Mammary epithelial cell (primary cell): ENCODE measurements at regions of chr18 and their contacts with region 1.

Region 1: DNA sequence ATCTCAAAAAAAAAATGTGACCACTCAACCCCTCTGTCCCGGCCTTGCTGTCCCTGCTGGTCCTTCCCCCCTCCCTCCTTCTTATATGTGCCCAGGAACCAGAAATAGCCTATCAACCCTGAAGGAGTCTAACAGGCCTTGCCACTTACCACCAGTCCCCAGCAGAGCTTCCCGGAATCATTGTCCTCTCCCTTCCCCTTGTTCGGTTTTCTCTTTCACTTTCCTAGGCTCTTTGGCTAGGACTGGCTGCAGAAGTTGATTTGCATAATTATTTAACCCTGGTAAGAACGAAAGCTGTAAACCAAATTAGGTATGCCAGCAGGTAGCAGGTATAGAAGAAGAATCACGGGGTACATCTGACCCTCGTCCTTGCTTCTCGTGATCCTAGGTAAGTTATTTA is 72.6 kb upstream of the ZNF532 start:
- DNase-seq: no peak
- H3K4me3 ChIP-seq: no peak overlapping the region
- H3K27ac ChIP-seq: no peak overlapping the region
- H3K4me1 ChIP-seq: peaks cover 20% of the 10 kb centered on the region
- H3K27me3 ChIP-seq: no peaks in the 10 kb centered on the region
- CTCF ChIP-seq: no peak

Region 2: DNA sequence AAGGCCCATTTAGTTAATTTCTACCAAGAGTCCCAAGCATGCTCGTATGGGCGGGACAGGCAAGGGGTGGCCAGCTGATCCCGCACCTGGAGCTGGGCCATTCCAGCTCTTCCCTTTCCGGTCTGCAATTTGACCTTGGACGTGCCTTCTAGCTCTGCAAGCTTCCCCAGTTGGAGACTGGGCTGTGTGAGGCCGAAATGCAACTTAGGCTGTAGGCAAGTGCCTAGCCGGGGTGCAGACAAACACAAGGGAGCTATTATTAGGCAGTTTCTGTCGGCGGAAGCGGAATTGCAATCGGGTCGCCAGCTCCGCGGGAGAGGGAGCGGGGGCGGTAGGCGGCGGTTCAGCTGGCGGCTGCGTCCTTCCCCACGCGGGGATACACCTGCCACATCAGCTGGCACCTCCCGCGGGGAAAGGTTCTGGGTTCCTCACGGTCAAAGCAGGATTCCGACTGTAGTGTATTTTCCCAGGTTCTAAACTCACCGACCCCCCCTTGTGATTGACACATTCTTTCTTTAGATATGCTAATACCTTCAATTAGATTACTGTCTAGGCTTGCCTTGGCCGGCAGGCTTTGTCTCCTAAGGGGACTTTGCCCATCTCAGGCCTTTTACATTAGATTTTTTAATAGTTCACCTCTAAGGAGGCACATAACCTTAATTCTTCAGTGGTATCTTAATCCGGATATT is 55.4 kb after region 1 on chr18:
- CTCF ChIA-PET with region 1: no interaction called
- dilution Hi-C with region 1: no loop called
- in situ Hi-C with region 1: no loop called
- intact Hi-C with region 1: loop called (anchors 2 kb)
- DNase-seq: no peak
- H3K4me3 ChIP-seq: no peak overlapping the region
- H3K27ac ChIP-seq: no peak overlapping the region
- H3K4me1 ChIP-seq: peaks cover 13% of the 10 kb centered on the region
- H3K27me3 ChIP-seq: no peaks in the 10 kb centered on the region
- CTCF ChIP-seq: no peak

Region 3: GRCh38 chr18:58863539-58864145 is 71.6 kb after region 1 on chr18:
- CTCF ChIA-PET with region 1: no interaction called
- dilution Hi-C with region 1: no loop called
- in situ Hi-C with region 1: loop called (anchors 5 kb)
- intact Hi-C with region 1: no loop called
- DNase-seq: no peak
- H3K4me3 ChIP-seq: peak overlapping the region; percentile 28 to 54 (median 46)
- H3K27ac ChIP-seq: peak overlapping the region; percentile 58
- H3K4me1 ChIP-seq: peaks cover 70% of the 10 kb centered on the region
- H3K27me3 ChIP-seq: no peaks in the 10 kb centered on the region
- CTCF ChIP-seq: no peak

Region 4: DNA sequence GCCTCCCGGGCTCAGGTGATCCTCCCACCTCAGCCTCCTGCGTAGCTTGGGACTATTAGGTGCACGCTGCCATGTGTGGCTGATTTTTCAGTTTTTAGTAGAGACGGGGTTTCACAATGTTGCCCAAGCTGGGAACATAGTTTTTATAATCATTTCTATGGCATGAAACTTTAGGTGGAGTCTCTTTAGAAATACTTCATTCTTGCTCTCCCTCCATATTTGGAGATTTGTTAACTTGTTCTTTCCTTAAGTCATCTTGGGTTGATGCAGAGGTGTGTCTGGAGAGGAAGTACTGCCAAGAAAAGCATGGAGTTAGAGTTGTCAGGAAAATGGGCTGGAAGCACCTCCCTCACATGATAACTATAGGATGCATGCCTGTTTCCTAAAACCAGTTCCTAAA is 90.0 kb after region 1 on chr18:
- CTCF ChIA-PET with region 1: no interaction called
- dilution Hi-C with region 1: loop called (anchors 5 kb)
- in situ Hi-C with region 1: no loop called
- intact Hi-C with region 1: no loop called
- DNase-seq: no peak
- H3K4me3 ChIP-seq: no peak overlapping the region
- H3K27ac ChIP-seq: no peak overlapping the region
- H3K4me1 ChIP-seq: peaks cover 8% of the 10 kb centered on the region
- H3K27me3 ChIP-seq: no peaks in the 10 kb centered on the region
- CTCF ChIP-seq: no peak

Region 5: DNA sequence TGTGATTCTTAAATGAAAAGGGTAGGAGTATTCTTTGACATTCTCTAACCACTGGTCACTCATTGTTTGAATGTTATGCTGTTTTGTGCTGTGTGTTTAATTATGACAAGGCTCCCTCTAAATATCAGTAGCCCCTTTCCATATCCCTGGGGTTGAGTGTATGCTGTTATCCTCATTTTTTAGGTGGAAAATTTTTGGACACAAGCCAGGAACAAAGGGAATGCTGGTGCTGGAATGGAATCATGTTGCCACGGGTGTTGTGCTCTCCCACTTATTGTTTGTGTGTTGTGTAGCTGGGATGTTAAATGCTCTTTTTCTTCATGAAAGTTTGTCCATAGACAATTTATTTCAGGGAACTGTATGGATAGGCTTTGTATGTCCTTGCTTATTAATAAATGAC is 115.9 kb after region 1 on chr18:
- CTCF ChIA-PET with region 1: no interaction called
- dilution Hi-C with region 1: no loop called
- in situ Hi-C with region 1: no loop called
- intact Hi-C with region 1: no loop called
- DNase-seq: no peak
- H3K4me3 ChIP-seq: no peak overlapping the region
- H3K27ac ChIP-seq: no peak overlapping the region
- H3K4me1 ChIP-seq: no peaks in the 10 kb centered on the region
- H3K27me3 ChIP-seq: no peaks in the 10 kb centered on the region
- CTCF ChIP-seq: no peak